HEK293T (cell line): ENCODE measurements at regions of chr14 and their contacts with region 1.

Region 1: GRCh38 chr14:23095196-23096108 is at the start of gene C14orf119:
- DNase-seq: peak; percentile 99

Region 2: DNA sequence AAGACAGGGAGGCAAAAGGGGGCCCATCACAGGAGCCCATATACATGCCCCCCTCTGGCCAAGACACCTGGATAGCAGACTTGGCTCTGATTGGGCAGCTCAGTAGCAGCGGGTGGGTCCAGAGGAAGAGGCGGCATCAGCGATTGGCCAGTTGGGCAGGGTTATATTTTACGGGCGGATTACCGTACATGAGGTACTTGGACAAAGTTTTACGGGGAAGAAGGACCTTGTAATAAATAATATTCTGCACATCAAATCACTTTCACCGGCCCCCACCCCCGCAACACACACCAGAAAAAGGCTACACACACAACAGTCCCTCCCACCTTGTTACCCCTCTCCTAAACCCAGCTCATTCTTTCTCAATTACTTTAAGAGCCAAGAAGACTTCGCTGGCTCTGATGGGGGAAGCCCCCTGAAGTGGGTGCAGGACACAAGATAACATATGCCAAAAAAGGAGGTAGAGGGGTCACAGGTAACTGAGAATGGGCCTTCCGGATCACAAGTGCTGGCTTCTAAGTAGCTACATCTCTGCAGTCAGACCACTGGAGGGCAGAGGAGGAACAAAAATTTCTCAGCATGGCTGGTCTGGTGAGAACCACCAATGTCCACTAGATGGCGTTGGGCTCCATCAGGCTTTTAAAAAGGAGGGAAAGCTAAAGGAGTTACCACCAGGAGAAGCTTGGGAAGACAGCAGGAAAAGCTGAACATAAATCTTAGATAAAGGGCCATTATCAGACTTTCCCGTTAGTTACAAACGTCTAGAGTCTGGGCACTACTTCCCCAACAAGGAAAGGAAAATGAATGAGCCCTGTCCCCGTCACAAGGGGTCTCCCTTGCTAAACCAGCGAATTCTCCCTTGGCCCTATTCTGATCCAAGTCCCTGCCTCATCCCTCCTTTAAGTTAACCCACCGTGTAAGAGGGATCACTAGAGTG is 26.7 kb before region 1 on chr14:
- CTCF ChIA-PET with region 1: interaction called, 26 read pairs
- POLR2A ChIA-PET with region 1: interaction called, 71 read pairs
- DNase-seq: peak; percentile 83

Region 3: GRCh38 chr14:23114669-23115491 is 19.4 kb after region 1 on chr14:
- CTCF ChIA-PET with region 1: interaction called, 3 read pairs
- POLR2A ChIA-PET with region 1: interaction called, 28 read pairs
- DNase-seq: no peak

Region 4: DNA sequence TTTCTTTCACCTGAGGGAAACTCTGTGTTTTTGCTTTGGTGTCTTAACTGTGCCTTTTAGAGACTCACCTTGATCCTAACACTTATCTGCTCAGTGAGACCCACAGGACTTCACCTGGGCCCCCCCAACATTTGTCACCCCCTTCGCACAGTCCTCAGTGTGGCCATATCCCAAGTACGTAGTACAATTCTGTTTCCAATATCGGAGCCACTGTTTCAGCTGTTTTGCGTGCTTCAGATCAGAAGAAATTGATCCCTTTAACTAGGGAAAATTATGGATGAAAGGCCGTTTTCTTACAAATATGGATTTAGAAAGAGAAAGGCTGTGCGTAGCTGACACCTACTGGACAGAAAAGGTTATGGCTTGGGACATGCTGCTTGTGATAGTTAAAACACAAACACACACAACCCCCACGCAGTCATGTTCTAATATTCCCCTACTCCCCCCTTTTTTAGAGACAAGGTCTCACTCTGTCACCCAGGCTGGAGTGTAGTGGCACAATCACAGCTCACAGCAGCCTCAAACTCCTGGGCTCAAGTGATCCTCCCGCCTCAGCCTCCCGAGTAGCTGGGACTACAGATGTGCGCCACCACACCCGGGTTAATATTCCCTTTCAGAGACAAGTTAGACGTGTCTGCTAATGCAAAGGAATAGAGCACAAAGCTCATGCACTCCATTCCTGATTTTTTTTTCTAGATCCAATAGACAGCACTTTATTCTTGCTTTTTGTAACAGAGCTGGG is 91.6 kb after region 1 on chr14:
- CTCF ChIA-PET with region 1: no interaction called
- POLR2A ChIA-PET with region 1: interaction called, 28 read pairs
- DNase-seq: peak; percentile 63

Region 5: GRCh38 chr14:23430788-23431085 is 335.3 kb after region 1 on chr14:
- CTCF ChIA-PET with region 1: no interaction called
- POLR2A ChIA-PET with region 1: no interaction called
- DNase-seq: no peak

Region 6: GRCh38 chr14:23751616-23752015 is 656.2 kb after region 1 on chr14:
- CTCF ChIA-PET with region 1: no interaction called
- POLR2A ChIA-PET with region 1: no interaction called
- DNase-seq: no peak